Head of caudate nucleus (tissue), 42 donors: ENCODE measurements at regions of chr12 and their contacts with region 1.

Region 1: GRCh38 chr12:42237052-42237852 is 796 bp downstream of the YAF2 start:
- DNase-seq: peak; percentile 26 to 83 (median 65)

Region 2: DNA sequence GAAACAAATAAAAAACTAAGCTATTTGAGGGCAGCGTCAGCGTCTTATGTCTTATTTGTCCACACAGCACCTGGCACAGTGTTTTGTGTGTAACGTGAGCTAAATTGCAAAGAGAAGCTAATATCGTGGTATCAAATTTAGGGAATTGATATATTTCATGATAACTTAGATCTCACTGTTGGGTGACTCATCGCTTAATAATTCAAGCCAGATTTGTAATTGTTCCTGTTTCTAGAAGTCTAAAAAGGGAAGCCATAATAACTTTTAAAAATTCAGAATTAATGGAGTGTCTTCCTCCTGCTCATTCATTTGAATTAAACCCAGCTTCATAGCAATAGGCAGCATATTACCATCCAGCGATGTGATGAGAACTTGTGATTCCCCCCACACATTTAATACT is 834.5 kb before region 1 on chr12:
- intact Hi-C with region 1: no loop called
- DNase-seq: no peak

Region 3: GRCh38 chr12:42097971-42098370 is 139.3 kb before region 1 on chr12:
- intact Hi-C with region 1: no loop called
- DNase-seq: no peak

Region 4: DNA sequence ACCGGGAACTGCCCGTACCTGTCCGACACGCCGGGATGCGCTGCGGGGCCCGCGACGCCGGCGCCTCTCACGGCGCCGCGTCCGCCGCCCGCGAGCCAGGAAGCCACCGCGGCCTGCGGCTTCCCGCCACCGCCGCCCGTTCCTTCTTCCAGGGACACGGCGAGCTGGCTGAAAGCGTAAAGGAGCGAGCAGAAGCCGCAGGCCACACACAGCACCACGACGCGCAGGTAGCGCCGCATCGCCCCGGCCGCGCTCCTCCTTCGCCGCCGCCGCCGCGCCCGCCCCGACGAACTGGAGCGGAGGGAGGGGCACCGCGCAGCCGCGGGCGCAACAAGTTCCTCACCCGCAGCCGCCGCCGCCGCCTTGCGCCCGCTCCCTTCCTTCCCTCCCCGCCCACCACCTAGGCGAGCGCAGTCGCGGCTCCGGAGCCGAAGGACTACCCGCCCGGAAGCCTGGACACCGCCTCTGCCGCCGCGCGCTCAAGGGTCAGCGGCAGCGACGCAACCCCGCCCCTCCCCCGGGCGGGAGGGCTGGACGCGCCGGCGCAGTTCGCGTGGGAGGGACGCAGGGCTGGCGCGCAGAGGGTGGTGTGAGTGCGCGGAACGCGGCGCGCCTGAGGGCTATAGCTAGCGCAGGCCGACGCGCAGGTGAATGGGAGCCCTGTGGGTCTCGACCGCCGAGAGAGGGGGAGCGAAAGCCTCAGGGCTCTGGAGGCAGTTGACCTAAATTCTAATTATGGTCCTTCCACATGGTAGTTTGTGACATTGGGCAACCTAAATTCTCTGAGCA is 92.7 kb before region 1 on chr12 and contains the start of gene GXYLT1:
- intact Hi-C with region 1: loop called (anchors 5 kb)
- DNase-seq: peak; percentile 46 to 94 (median 87)

Region 5: DNA sequence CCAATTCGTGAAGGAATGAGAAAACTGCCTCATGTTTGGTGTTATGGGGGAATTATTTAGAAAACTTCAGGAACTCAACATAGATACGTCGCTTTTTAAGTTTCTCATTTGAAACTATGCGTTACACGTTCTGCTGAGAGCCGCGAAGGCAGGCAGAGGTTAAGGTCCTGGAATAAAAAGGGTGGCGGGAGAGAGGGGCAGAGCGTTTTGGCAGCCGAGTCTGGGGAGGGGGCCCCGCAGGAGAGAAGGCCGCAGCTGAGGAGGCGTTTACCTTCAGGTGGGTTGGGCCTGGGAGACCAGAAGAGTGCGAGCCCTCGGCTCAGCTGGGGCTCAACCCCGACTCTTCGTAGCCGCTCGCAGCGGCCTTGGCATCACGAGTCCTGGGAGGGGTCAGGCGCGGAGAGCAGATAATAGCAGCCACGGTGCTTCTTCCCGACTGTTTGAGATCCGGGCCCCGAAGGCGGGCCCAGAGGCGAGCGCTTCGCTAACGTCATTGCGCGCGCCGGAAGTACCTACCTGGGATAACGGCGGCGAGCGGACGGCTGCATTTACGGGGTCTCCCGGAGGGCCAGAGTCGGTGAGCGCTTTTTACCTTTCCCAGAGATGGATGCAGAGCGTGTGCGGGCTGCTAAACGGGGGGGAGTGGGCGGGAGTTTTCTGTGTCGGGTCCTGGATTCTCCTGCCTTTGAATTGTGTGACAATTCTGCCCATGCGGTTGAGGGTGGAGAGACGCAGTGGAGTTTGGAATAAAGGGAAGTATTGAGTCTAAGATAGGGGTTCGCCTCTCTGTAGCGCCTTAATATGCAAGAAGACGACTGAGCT is 88.6 kb after region 1 on chr12 and contains the starts of genes PPHLN1 and ZCRB1:
- intact Hi-C with region 1: loop called (anchors 5 kb)
- DNase-seq: peak; percentile 64 to 95 (median 87)